BJ (cell line): ENCODE measurements at regions of chr2 and their contacts with region 1.

Region 1: GRCh38 chr2:43887176-43887575 is 48.4 kb downstream of the ABCG8 start:
- DNase-seq: no peak
- H3K4me3 ChIP-seq: no peak overlapping the region
- H3K27me3 ChIP-seq: no peaks in the 10 kb centered on the region
- CTCF ChIP-seq: no peak

Region 2: GRCh38 chr2:43958397-43959275 is 71.5 kb after region 1 on chr2:
- CTCF ChIA-PET with region 1: no interaction called
- POLR2A ChIA-PET with region 1: interaction called, 12 read pairs
- DNase-seq: no peak
- H3K4me3 ChIP-seq: no peak overlapping the region
- H3K27me3 ChIP-seq: no peaks in the 10 kb centered on the region
- CTCF ChIP-seq: no peak